Activated naive CD4-positive, alpha-beta T cell treated with anti-CD3 and anti-CD28 coated beads for 36 hours (primary cell): ENCODE measurements at regions of chr2 and their contacts with region 1.

Region 1: DNA sequence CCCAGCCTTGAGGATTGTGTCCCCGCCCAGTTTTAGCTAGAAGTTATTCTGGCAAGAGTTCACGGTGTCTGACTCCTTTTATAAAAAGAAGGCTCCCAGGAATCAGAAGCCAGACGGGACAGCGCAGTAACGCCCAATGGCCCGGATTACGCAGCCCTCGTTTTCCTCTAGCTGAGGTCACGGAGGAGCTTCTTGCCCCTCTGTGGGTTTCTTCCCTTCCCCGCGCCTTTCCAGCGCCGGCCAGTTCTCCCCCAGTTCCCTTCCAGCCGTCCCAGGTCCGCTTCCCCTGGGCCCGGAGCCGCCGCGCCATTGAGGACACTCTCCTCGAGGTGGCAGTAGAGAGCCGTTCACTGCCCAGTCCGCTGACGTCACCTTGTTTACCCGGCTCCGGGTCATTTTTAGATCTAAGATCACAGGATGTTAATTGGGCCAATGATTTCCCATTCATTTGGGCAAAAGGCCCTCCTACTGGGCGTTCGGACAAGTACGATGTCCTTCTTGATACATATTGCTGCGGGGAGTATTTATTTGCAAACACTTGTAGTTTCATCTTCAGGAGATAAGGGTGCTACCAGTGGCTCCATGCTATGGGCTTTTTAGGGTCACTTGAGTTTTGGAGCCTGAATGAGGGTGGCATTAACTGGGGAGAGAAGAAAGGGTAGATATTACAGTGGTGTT is 81.5 kb upstream of the PPM1B start:
- DNase-seq: peak; percentile 91
- H3K4me3 Mint-ChIP-seq: peak overlapping the region; percentile 66
- H3K27ac Mint-ChIP-seq: peak overlapping the region; percentile 54
- H3K4me1 Mint-ChIP-seq: peaks cover 13% of the 10 kb centered on the region
- H3K27me3 Mint-ChIP-seq: no peaks in the 10 kb centered on the region

Region 2: DNA sequence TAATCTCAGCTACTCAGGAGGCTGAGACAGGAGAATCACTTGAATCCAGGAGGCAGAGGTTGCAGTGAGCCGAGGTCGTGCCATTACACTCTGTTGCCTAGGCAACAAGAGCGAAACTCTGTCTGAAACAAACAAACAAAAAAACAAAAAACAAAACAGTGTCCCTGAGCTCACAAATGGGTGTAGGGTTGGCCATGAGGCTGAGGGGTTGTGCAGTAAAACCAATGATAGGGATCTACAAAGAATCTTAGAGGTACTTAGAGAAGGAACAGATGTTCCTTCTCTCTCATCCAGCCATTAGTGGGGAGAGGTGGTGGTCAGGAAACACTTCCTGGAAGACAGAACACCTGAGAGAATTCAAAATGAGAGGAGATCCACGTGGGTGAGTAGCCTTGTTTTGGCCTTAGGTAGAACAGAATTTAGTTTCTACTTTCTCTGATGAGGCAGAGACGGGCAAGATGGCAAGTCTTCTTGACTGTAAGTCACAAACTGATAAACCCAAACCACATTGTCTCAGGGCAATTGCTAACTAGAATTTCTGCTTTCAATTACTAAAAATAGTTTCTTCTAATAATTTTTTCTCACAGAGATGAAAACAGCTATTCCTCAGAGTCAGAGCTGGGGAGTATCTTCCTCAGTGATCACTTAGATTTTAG is 20.0 kb after region 1 on chr2:
- CTCF ChIA-PET with region 1: no interaction called
- intact Hi-C with region 1: no loop called
- DNase-seq: no peak
- H3K4me3 Mint-ChIP-seq: no peak overlapping the region
- H3K27ac Mint-ChIP-seq: no peak overlapping the region
- H3K4me1 Mint-ChIP-seq: peaks cover 9% of the 10 kb centered on the region
- H3K27me3 Mint-ChIP-seq: no peaks in the 10 kb centered on the region

Region 3: DNA sequence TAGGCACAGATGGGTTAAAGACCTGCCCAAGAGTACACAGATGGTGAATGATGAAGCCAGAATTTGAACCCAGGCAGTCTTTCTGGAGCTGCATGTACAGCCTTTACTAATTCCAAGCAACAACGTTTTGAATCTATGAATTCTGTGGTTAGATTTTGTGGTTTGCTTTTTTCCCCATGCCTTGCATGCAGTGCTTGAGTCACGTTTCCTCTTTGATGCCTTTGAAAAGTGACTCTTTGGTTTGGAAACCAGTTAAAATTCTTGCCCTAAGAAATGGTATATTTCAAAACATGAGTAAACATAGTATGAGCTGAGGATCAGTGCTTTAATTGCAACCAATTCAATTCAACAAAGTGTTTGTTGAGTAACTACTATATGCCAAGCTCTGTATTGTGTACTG is 33.3 kb after region 1 on chr2:
- CTCF ChIA-PET with region 1: interaction called, 8 read pairs
- intact Hi-C with region 1: loop called (anchors 1 kb)
- DNase-seq: peak; percentile 62
- H3K4me3 Mint-ChIP-seq: no peak overlapping the region
- H3K27ac Mint-ChIP-seq: peak overlapping the region; percentile 4
- H3K4me1 Mint-ChIP-seq: peaks cover 32% of the 10 kb centered on the region
- H3K27me3 Mint-ChIP-seq: no peaks in the 10 kb centered on the region

Region 4: DNA sequence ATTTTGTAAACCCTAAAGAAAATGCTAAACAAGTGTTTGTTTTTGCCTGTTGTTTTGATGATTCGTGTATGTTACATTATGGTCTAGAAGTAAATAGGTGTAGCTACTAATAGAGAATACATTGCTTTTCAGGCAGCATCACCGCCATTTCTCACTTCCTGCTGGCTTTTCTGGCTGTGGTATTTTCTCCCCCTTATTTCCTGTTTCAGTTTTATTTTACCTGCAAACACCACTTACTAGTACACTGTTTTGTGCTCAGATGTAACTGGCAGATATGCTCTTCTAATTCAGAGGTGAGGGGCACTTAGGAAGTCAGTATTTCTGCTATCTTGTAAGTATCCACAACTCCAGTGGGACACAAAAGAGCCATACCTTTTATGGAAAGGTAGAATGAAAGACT is 150.0 kb after region 1 on chr2:
- CTCF ChIA-PET with region 1: interaction called, 8 read pairs
- intact Hi-C with region 1: loop called (anchors 2 kb)
- DNase-seq: peak; percentile 40
- H3K4me3 Mint-ChIP-seq: no peak overlapping the region
- H3K27ac Mint-ChIP-seq: no peak overlapping the region
- H3K4me1 Mint-ChIP-seq: peaks cover 32% of the 10 kb centered on the region
- H3K27me3 Mint-ChIP-seq: no peaks in the 10 kb centered on the region

Region 5: GRCh38 chr2:44244129-44244871 is 157.1 kb after region 1 on chr2:
- CTCF ChIA-PET with region 1: interaction called, 8 read pairs
- intact Hi-C with region 1: loop called (anchors 1 kb)
- DNase-seq: peak; percentile 69
- H3K4me3 Mint-ChIP-seq: peak overlapping the region; percentile 71
- H3K27ac Mint-ChIP-seq: no peak overlapping the region
- H3K4me1 Mint-ChIP-seq: peaks cover 21% of the 10 kb centered on the region
- H3K27me3 Mint-ChIP-seq: no peaks in the 10 kb centered on the region

Region 6: DNA sequence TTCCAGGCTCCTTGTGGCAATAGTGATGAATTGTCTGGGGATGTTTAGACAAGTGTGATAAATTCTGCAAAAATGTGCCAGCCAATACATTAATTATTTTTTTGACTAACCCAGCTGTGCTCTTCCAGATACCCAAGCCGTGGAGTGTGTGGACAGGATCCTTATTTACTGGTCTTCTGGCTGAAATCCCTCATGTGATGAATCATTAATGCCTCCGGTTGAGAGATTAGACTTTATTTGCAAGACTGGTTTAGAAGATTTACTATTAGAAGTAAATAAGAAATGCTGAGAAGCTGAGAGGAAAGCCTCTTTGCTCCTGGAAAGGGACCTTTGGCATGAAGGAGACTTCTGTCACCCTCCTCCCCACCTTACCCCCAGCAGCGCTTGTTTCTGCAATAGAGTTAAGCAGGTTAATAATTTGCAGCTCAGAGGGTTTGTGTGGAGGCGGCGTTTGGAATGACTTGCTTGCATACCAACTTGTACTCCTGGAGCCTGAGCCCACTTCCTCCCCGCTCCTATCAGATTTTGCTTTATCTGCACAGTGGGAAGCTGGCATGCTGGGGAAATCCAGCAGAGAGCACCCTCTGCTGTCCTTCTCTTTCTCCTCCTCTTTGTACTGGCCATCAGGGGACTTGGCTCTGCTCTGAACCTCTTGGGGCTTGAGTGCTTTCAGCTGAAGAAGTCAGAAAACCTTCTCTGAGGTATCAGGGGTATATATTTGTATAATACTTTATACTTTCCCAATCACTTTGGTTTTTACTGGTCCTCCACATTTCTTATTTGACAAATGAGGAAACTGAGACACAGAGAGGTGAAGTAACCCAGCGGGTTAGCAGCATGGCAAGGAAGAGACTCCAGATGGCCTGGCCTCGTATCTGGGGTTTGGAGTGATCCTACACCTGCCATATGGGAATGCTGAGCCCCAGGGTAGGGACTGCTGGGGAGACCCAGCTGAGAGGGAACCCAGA is 204.4 kb after region 1 on chr2:
- CTCF ChIA-PET with region 1: interaction called, 4 read pairs
- intact Hi-C with region 1: loop called (anchors 1 kb)
- DNase-seq: peak; percentile 16
- H3K4me3 Mint-ChIP-seq: no peak overlapping the region
- H3K27ac Mint-ChIP-seq: no peak overlapping the region
- H3K4me1 Mint-ChIP-seq: peaks cover 9% of the 10 kb centered on the region
- H3K27me3 Mint-ChIP-seq: no peaks in the 10 kb centered on the region

Region 7: DNA sequence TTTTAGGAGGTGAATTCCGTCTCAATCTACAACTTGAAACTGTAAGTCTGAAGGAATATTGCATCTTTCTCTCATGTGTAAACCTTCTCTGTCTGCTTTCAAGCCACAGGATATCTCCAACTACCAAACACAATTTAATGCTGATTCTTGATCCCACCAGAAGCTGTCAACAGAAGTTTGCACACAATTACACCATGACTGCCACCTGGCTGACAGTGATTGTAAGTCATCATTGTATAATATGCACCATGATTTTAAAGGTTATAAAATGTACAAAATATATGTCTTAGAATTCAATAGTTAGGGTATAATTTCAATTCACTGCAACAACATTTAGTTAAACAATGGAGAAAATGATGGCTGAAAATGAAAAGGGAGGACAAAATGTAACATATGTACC is 255.7 kb after region 1 on chr2:
- CTCF ChIA-PET with region 1: interaction called, 10 read pairs
- intact Hi-C with region 1: loop called (anchors 1 kb)
- DNase-seq: peak; percentile 30
- H3K4me3 Mint-ChIP-seq: no peak overlapping the region
- H3K27ac Mint-ChIP-seq: no peak overlapping the region
- H3K4me1 Mint-ChIP-seq: no peaks in the 10 kb centered on the region
- H3K27me3 Mint-ChIP-seq: no peaks in the 10 kb centered on the region

Region 8: DNA sequence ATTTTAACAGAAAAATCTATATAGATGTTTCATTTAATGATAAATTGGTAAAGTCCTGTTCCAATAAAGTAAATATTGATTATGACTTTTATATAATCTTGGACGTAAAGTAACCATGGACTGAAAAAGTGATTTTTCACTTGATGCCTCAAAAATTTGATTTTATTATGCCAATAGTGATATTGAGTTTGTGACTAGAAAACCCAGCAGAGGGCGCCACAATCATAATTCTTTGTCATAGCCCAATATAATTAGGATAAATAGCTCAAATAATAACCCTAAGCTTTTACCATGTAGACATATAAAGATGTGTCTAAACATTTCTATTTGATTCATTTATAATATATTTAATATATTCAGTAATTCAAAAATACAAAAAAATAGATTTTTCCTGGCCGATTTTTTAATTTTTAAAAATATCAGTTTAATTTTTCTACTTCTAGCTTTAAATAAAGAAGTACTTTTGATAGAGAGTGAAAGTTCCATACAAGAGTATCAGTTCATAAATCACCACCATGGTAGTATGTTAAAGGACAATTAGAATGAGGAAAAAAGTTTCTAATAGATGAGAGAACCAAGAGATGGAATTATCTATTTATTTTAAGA is 305.3 kb after region 1 on chr2:
- CTCF ChIA-PET with region 1: interaction called, 5 read pairs
- intact Hi-C with region 1: loop called (anchors 2 kb)
- DNase-seq: peak; percentile 72
- H3K4me3 Mint-ChIP-seq: no peak overlapping the region
- H3K27ac Mint-ChIP-seq: no peak overlapping the region
- H3K4me1 Mint-ChIP-seq: peaks cover 5% of the 10 kb centered on the region
- H3K27me3 Mint-ChIP-seq: no peaks in the 10 kb centered on the region